AG04450 (cell line): ENCODE measurements at regions of chr5 and their contacts with region 1.

Region 1: DNA sequence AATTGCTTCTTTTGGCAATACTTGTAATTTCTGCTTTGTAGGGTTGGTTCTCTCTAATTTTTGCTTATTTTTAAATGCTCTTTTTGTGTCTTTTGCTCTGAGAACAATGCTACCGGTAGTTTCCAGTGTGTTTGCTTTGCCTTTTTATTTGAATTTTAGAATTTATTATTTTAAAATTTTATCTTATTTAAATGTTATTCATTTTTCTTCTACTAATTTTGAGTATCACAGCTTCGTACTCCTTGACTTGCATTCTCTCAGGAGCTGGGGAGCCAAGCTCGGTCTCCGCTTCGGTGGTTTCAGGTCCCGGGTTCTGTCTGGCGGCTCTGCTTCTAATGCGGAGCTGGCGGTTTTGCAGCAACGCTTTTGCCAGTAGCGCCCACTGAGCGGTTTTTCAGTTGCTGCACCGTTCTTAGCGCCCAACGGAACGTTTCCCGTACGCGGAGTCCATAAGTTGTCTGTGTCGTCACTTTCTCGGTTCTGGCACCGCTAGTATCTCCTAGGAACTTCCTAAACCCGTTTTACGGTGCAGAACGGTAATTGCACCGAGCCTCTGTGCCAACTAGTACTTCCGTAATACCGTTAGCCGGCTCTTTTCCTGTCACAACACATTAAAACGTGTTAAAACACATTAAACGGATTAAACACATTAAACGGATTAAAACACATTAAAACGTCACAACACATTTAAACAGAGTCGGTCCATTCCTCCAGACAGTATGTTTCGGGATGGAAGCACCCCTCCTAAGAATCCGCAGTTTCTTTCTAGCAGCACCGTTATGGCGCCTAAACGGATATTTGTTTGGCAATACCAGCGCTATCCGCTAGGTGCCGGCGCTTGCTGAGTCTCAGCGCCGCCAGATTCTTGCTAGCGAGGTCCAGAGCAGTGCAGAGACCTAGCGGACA is 45.6 kb downstream of the ANXA2R start:
- DNase-seq: peak; percentile 81
- H3K4me3 ChIP-seq: peak overlapping the region; percentile 66
- H3K27ac ChIP-seq: peak overlapping the region; percentile 97
- H3K27me3 ChIP-seq: no peaks in the 10 kb centered on the region
- CTCF ChIP-seq: peak; percentile 94

Region 2: GRCh38 chr5:42950440-42951292 is 43.8 kb before region 1 on chr5:
- CTCF ChIA-PET with region 1: interaction called, 6 read pairs
- POLR2A ChIA-PET with region 1: interaction called, 13 read pairs
- DNase-seq: peak; percentile 99
- H3K4me3 ChIP-seq: peak overlapping the region; percentile 64
- H3K27ac ChIP-seq: peak overlapping the region; percentile 99
- H3K27me3 ChIP-seq: no peaks in the 10 kb centered on the region
- CTCF ChIP-seq: no peak

Region 3: GRCh38 chr5:43008369-43009153 is 14.1 kb after region 1 on chr5:
- CTCF ChIA-PET with region 1: interaction called, 15 read pairs
- POLR2A ChIA-PET with region 1: interaction called, 16 read pairs
- DNase-seq: peak; percentile 79
- H3K4me3 ChIP-seq: peak overlapping the region; percentile 61
- H3K27ac ChIP-seq: peak overlapping the region; percentile 98
- H3K27me3 ChIP-seq: no peaks in the 10 kb centered on the region
- CTCF ChIP-seq: 0 out of 2 replicates have a peak, but pooled peaks have one; percentile 7

Region 4: DNA sequence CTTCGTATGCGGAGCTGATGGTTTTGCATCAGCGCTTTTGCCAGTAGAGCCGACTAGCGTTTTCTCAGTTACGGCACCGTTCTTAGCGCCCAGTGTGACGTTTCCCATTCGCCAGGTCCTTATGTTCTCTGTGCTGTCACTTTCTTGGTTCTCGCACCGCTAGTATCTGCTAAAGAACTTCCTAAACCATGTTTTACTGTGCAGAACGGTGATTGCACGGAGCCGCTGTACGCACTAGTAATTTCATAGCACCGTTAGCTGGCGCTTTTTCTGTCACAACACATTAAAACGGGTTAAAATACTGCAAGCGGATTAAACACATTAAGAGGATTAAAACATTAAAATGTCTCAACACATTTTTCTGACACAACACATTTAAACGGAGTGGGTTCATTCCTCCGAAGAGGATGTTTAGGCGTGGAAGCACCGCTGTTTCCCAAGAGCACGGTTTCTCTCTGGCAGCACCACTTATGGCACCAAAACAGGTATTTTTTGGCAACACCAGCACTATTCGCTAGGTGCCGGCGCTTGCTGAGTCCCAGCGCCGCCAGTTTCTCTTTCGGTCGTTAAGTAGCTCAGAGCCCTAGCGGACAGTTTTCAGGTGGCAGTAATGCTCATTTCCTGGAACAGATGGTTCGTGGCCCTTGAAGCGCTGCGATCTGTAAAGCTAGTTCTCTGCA is 25.3 kb after region 1 on chr5:
- CTCF ChIA-PET with region 1: interaction called, 8 read pairs
- POLR2A ChIA-PET with region 1: interaction called, 10 read pairs
- DNase-seq: no peak
- H3K4me3 ChIP-seq: peak overlapping the region; percentile 68
- H3K27ac ChIP-seq: peak overlapping the region; percentile 90
- H3K27me3 ChIP-seq: no peaks in the 10 kb centered on the region
- CTCF ChIP-seq: peak; percentile 61

Region 5: DNA sequence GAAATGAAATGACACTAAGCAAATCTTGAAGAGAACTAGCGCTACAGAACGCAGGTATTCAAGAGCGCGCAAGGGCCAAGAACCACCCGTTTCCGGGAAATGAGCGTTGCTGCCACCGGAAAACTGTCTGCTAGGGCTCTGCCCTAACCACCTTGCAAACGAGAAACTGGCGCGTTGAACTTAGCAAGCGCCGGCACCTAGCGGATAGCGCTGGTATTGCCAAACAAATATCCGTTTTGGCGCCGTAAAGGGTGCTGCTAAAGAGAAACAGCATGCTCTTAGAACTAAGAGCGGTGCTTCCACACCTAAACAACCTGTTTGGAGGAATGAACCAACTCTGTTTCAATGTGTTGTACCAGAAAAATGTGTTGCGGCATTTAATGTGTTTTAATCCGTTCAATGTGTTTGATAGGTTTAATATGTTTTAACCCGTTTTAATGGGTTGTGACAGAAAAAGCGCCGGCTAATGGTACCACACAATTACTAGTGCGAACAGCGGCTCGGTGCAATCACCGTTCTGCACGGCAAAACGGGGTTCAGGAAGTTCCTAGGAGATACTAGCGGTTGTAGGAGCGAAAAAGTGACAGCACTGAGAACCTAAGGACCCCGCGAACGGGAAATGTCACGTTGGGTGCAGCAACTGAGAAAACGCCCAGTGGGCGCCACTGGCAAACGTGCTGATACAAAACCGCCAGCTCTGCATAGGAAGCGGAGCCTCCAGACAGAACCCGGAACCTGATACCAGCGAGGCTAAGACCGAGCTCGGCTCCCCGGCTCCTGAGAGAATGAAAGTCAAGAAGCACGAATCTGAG is 46.0 kb after region 1 on chr5 and contains the start of gene ANXA2R:
- CTCF ChIA-PET with region 1: interaction called, 48 read pairs
- POLR2A ChIA-PET with region 1: interaction called, 26 read pairs
- DNase-seq: peak; percentile 91
- H3K4me3 ChIP-seq: peak within 1 kb of the TSS; percentile 83
- H3K27ac ChIP-seq: peak within 1 kb of the TSS; percentile 98
- H3K27me3 ChIP-seq: no peaks in the 10 kb centered on the region
- CTCF ChIP-seq: peak; percentile 90
- polyA plus RNA-seq, gene ANXA2R: 3.7 and 4.9 TPM in 2 replicates

Region 6: GRCh38 chr5:43215073-43215631 is 220.7 kb after region 1 on chr5:
- CTCF ChIA-PET with region 1: no interaction called
- POLR2A ChIA-PET with region 1: no interaction called
- DNase-seq: no peak
- H3K4me3 ChIP-seq: no peak overlapping the region
- H3K27ac ChIP-seq: no peak overlapping the region
- H3K27me3 ChIP-seq: peaks cover 6% of the 10 kb centered on the region
- CTCF ChIP-seq: no peak